Activated CD8-positive, alpha-beta memory T cell treated with anti-CD3 and anti-CD28 coated beads, Interleukin-2, amount 10 ng/mL, durations not matched to agents 7 days and 5 days (primary cell): ENCODE measurements at regions of chr1 and their contacts with region 1.

Region 1: DNA sequence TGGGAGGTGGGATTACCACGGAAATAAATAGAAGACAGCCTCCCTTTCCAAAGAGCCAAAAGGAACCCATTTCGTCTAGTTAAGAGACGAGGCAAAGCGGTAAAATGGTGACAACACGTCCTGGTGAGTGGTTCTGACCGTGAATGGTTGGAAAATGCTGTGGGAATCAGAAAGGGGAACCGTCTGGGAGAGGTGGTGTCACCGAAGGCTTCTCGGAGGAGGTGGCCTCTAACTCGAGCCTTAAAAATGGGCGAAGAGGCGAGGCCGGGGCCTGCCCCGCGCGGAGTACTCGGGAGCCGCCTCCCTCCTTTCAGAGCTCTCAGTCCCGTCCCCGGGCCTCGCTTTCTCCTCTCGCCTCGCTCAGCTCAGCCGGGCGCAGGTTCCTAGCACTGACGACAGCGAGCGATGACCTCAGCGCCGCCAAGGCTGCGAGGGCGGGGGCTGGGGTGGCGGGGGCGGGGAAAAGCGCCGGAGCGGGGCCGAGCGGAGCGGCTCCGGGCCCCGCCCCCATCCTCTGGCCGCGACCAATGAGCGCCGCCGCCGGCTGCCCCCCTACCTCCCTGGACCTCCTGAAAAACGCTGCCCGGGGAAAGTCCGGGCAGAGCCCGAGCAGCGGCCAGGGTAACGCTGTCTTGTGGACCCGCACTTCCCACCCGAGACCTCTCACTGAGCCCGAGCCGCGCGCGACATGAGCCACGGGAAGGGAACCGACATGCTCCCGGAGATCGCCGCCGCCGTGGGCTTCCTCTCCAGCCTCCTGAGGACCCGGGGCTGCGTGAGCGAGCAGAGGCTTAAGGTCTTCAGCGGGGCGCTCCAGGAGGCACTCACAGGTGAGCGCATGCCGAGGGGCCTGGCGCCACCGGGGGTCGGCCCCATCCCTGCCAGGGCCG is at the start of gene BTG2:
- DNase-seq: peak; percentile 93
- ATAC-seq: peak; percentile 81
- H3K4me3 Mint-ChIP-seq: peak within 1 kb of the TSS; percentile 95
- H3K27ac Mint-ChIP-seq: peak within 1 kb of the TSS; percentile 96
- H3K4me1 Mint-ChIP-seq: peaks cover 58% of the 10 kb centered on the region
- H3K27me3 Mint-ChIP-seq: no peaks in the 10 kb centered on the region
- total RNA-seq, gene BTG2: 72.2 to 142 TPM

Region 2: DNA sequence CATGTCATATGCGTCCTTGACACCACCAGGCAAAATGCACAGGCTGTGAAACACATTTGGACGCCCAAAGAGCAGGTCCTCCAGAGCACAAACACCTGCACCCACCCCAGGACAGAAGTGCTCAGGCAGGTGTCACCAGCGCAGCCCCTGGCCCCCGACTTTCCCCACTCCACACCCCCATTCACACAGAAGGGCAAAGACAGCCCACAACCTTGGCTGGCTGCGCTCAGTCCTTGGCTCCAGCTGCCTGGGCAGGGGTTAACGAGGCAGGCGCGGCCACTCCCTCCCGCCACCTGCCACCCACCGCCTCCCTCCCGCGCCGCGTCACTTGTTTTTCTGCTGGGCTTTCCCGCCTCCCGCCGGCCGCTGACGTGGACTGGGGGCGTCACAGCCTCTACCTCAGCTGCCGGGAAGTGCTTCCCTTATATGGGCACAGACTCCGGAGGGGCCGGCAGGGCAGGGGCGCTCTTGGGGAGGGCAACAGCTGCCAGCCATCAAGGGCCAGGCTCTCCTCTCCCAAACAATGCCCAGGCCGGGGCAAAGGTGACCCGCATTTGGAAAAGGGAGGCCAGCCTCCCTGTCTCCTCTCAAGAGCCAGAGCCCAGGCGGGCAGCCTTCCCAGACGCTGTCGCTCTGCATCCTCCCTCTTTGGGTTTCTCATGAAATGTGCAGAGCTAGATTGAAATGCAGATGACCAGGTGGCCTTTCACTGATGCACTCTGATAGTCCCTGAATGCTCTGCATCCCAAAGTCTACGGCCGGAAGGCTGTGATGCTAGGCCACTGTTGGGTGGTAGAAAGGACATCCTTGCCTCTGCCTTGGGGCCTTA is 14.7 kb before region 1 on chr1:
- CTCF ChIA-PET with region 1: interaction called, 345 read pairs
- DNase-seq: peak; percentile 97
- ATAC-seq: peak; percentile 62
- H3K4me3 Mint-ChIP-seq: peak overlapping the region; percentile 75
- H3K27ac Mint-ChIP-seq: peak overlapping the region; percentile 99
- H3K4me1 Mint-ChIP-seq: peaks cover 68% of the 10 kb centered on the region
- H3K27me3 Mint-ChIP-seq: no peaks in the 10 kb centered on the region

Region 3: GRCh38 chr1:203316626-203317093 is 11.5 kb after region 1 on chr1:
- CTCF ChIA-PET with region 1: interaction called, 185 read pairs
- DNase-seq: no peak
- ATAC-seq: no peak
- H3K4me3 Mint-ChIP-seq: no peak overlapping the region
- H3K27ac Mint-ChIP-seq: no peak overlapping the region
- H3K4me1 Mint-ChIP-seq: peaks cover 22% of the 10 kb centered on the region
- H3K27me3 Mint-ChIP-seq: no peaks in the 10 kb centered on the region

Region 4: DNA sequence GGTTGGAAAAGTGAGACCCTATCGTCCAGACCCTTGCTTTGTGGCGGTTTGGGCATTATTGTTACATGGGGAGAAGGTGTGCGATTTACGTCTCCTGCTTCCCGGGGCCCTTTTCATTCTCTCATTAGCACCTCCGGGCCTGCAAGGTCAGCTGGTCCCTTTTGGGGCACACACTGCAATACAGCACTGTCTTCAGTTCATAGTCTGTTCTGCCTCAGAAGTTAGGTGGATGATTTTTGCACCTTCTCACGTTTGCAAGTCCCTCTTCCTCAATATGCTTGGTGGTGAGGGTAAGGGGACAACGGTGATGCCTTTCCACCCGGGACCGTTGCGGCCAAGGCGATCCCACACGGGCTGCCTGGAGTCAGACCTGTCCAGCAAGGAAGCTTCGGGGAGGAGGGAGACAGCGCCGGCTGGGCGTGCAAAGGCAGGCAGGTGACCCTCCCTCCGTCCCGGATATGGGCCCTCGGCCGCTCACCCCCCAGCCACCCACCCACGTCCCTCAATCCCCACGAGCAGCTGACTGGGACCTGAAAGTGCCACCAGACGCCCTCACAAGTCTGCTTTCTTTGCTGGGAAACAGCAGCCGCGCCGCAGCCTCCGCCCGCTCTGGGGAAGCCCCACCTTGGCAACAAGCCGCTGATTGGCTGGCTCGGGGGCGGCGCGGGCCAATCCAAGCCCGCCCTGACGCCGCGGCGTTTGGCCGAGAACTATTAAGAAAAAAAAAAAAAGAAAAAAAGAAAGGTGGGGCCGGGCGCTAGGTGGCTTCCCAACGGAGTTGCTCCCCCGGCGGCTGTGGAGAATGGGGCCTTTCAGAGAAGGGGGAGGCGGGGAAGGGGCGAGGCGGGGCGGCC is 21.9 kb after region 1 on chr1:
- CTCF ChIA-PET with region 1: interaction called, 185 read pairs
- DNase-seq: peak; percentile 96
- ATAC-seq: peak; percentile 91
- H3K4me3 Mint-ChIP-seq: peak overlapping the region; percentile 71
- H3K27ac Mint-ChIP-seq: peak overlapping the region; percentile 91
- H3K4me1 Mint-ChIP-seq: peaks cover 66% of the 10 kb centered on the region
- H3K27me3 Mint-ChIP-seq: no peaks in the 10 kb centered on the region

Region 5: DNA sequence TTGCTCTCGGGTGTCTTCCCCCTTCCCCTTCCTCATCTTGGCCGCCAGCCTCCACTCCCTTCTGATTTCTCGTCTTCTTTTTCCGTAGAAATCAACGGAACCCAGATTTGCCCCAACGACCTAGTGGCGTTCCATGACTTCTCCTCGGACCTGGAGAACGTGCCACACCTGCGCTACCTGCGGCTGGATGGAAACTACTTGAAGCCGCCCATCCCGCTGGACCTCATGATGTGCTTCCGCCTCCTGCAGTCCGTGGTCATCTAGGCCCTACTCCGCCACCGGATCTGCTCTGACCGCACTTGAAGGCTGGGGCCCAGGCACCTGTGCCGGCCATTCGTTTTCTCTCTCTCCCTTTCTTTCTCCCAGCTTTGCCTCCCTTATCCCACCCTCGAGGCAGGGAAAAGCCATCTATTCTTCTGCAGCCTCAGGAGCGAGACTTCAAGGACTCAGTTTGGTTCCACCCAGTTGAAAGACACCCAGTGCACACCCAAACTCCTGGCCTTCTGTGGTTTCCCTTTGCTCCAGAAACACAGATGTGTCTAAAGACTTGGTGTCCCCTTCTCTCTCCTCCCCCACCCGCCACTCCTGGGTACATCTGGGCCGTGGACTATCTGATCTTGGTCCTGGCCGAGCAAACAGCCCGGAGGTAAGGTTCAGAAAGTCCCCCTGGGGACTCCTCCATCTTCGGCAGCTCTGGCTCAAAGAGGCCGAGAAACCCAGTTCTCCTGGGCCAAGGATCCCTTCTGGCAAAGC is 181.6 kb after region 1 on chr1:
- CTCF ChIA-PET with region 1: interaction called, 14 read pairs
- DNase-seq: no peak
- ATAC-seq: no peak
- H3K4me3 Mint-ChIP-seq: no peak overlapping the region
- H3K27ac Mint-ChIP-seq: no peak overlapping the region
- H3K4me1 Mint-ChIP-seq: peaks cover 4% of the 10 kb centered on the region
- H3K27me3 Mint-ChIP-seq: peaks cover under 1% of the 10 kb centered on the region